Dendritic cell treated with granulocyte-macrophage colony-stimulating factor and Interleukin-4, amounts not matched to agents 40 ng/mL and 50 ng/mL, for 4 days (primary cell): ENCODE measurements at regions of chr4 and their contacts with region 1.

Region 1: GRCh38 chr4:141346144-141346543 is 125.4 kb downstream of the ZNF330 start:
- H3K4me3 Mint-ChIP-seq: no peak overlapping the region
- H3K27ac Mint-ChIP-seq: no peak overlapping the region
- H3K4me1 Mint-ChIP-seq: peaks cover 41% of the 10 kb centered on the region
- H3K27me3 Mint-ChIP-seq: no peaks in the 10 kb centered on the region

Region 2: GRCh38 chr4:141220655-141221605 is 125.2 kb before region 1 on chr4 and contains the start of gene ZNF330:
- intact Hi-C with region 1: loop called (anchors 10 kb)
- H3K4me3 Mint-ChIP-seq: peak within 1 kb of the TSS; percentile 93
- H3K27ac Mint-ChIP-seq: peak within 1 kb of the TSS; percentile 97
- H3K4me1 Mint-ChIP-seq: peaks cover 23% of the 10 kb centered on the region
- H3K27me3 Mint-ChIP-seq: no peaks in the 10 kb centered on the region

Region 3: GRCh38 chr4:141301216-141301615 is 44.9 kb before region 1 on chr4:
- intact Hi-C with region 1: no loop called
- H3K4me3 Mint-ChIP-seq: no peak overlapping the region
- H3K27ac Mint-ChIP-seq: no peak overlapping the region
- H3K4me1 Mint-ChIP-seq: peaks cover 6% of the 10 kb centered on the region
- H3K27me3 Mint-ChIP-seq: peaks cover 2% of the 10 kb centered on the region

Region 4: DNA sequence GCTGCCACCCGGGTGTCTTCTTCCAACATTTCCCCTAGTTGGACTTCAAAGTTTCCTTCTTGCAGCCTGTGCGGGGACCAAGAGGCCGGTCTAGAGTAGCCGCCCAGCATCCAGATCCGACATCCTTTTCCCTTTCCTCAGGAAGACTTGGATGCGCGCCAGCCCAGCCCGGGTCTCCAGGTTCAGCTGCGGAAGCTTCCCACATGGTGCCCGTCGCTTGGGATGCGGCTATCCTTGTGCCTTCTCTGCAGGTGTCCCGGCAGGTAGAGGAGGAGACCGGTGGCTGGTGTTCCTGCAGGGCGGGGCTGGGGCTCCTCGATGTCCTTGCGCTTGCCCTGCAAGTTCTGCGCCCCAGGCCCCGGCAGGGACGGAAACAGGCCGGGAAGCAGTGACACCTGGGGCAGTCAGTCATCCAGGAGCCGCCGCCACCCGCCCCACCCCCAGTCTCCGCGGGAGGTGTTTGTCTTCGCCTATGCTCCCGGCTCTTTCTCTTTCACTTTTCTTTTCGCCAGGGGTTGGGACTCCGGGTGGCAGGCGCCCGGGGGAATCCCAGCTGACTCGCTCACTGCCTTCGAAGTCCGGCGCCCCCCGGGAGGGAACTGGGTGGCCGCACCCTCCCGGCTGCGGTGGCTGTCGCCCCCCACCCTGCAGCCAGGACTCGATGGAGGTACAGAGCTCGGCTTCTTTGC is 290.1 kb after region 1 on chr4 and contains the start of gene IL15:
- intact Hi-C with region 1: loop called (anchors 5 kb)
- H3K4me3 Mint-ChIP-seq: peak within 1 kb of the TSS; percentile 92
- H3K27ac Mint-ChIP-seq: peak within 1 kb of the TSS; percentile 92
- H3K4me1 Mint-ChIP-seq: peaks cover 29% of the 10 kb centered on the region
- H3K27me3 Mint-ChIP-seq: peaks cover 24% of the 10 kb centered on the region

Region 5: DNA sequence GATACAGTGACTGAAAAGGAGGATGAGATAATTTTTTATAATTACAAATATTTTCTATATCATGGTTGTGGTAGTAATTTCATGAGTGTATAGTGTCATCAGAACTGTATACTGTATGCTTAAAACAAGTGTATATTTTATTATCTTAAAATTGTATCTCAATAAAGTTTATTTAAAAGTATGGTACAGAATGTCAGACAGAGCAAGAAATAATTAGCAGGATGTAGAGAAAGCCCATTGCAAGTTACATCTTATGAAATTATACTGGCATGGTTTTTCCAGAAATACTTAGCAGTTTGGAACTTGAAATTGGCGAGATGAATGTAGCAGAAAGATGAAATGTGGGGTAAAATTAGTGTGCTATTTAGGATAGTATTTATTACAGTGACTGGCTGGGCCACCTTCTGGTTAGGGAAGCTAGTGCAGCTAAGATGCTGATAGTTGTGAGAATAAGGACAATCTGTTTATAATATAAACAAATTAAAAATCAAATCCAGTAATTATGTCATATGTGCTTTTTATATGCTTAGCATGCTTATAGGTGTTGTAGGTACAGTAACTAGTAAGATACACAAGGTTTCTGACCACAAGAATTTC is 365.0 kb after region 1 on chr4:
- intact Hi-C with region 1: loop called (anchors 2 kb)
- H3K4me3 Mint-ChIP-seq: no peak overlapping the region
- H3K27ac Mint-ChIP-seq: no peak overlapping the region
- H3K4me1 Mint-ChIP-seq: peaks cover 25% of the 10 kb centered on the region
- H3K27me3 Mint-ChIP-seq: peaks cover 30% of the 10 kb centered on the region

Region 6: GRCh38 chr4:142126890-142127497 is 780.9 kb after region 1 on chr4:
- intact Hi-C with region 1: loop called (anchors 10 kb)
- H3K4me3 Mint-ChIP-seq: no peak overlapping the region
- H3K27ac Mint-ChIP-seq: no peak overlapping the region
- H3K4me1 Mint-ChIP-seq: peaks cover 9% of the 10 kb centered on the region
- H3K27me3 Mint-ChIP-seq: no peaks in the 10 kb centered on the region

Region 7: DNA sequence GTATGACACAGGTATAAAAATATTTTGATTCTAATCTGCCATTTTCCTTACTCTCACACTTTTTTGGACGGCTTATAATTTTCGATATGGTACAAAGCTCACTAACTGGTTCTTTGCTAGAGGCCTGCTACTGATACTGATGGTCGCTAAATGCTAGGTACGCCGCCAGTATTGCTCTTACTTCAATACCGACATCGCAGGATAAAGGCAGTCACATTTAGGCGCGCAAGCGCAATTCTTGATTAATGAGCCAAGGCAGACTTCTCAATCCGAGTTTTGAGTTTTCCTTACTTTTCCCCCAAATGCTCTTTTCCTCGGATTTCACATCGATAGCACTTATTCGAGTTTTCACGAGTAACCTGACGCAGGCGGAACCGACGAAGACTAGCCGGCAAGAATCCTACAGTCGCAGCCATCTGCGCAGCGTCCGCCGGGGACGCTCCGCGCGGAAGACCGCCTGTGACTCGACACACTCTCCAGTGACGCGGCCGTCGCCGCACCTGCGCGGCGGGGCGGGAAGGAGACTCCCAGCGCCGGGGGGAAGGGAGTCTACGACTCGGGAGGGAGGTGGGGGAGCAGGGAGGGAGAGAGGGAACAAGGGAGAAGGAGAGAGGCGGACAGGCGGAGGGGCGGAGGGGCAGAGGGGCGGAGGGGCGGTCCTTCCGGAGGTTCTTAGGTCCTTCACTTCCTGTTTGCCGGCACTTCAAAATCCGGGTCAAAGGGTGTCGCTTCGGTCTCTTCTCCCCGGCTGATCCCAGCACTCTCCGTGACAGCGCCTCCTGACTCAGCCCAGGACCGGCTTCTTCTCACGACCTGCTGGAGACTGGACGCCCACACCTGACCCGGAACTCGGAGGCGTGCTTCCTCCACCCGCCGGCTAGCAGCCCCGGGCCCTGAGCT is 1838.3 kb after region 1 on chr4 and contains the start of gene USP38:
- intact Hi-C with region 1: loop called (anchors 10 kb)
- H3K4me3 Mint-ChIP-seq: peak within 1 kb of the TSS; percentile 99
- H3K27ac Mint-ChIP-seq: peak within 1 kb of the TSS; percentile 87
- H3K4me1 Mint-ChIP-seq: peaks cover 38% of the 10 kb centered on the region
- H3K27me3 Mint-ChIP-seq: no peaks in the 10 kb centered on the region